Activated CD4-positive, alpha-beta T cell treated with anti-CD3 and anti-CD28 coated beads, Interleukin-2, amount 10 ng/mL, durations not matched to agents 24 days and 14 days (primary cell): ENCODE measurements at regions of chr1 and their contacts with region 1.

Region 1: DNA sequence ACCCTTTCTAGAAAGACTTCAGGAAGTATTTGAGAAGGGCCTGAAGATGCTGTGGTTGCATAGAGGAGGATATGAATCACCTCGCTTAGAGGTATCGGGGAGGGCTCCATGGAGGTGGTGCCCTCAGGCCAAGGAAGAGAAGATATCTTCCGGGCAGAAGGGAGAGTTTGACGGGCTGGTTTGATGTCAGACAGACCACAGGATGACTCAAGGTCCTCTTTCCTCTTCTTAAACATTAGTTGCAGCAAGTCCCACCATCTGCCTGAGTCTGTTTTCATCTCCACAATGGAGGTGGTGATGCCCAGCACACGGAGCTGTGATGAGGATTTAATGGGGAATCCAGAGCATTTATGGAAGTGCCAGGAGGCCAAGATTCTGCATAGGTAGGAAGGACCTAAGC is 25.1 kb upstream of the RUNX3 start:
- DNase-seq: peak; percentile 92
- H3K4me3 Mint-ChIP-seq: peak overlapping the region; percentile 81
- H3K27ac Mint-ChIP-seq: peak overlapping the region; percentile 94
- H3K4me1 Mint-ChIP-seq: peaks cover 79% of the 10 kb centered on the region
- H3K27me3 Mint-ChIP-seq: no peaks in the 10 kb centered on the region

Region 2: DNA sequence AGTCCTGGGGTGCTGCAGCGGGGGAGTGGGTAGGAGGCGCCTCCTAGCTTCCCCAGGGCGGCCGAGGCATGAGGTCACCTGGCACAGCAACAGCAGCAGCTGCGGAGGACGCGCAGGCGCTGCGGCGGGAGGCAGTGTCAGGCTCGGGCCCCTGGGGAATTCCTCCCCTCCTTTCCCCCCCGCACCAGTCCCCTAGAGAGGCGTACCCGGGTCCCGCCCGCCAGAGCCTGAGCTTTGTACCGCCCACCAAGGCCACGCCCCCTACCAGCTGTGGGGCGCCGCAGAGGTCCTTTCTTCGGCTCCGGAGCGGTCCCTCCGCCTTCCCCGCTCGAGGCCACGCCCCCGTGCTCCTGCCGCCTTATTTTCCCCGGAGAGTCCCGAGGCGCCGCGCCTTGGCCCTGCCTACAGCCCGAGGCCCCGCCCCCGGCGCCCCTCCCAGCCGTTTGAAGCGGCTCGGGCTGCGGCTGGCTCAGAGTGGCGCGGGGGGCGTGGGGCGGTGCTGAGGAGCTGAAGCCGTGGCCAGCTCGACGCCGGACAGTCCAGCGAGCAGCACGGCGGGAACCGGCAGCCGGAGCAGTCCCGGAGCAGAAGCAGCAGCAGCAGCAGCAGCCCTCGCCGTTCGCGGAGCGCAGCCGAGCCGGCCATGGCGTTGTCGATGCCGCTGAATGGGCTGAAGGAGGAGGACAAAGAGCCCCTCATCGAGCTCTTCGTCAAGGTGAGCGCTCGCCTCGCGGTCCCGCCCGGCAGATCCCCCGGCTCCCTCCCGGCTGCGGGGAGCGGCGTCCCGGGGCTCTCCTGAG is 210.1 kb before region 1 on chr1 and contains the start of gene CLIC4:
- intact Hi-C with region 1: loop called (anchors 10 kb)
- DNase-seq: peak; percentile 100
- H3K4me3 Mint-ChIP-seq: peak within 1 kb of the TSS; percentile 94
- H3K27ac Mint-ChIP-seq: peak within 1 kb of the TSS; percentile 86
- H3K4me1 Mint-ChIP-seq: peaks cover 53% of the 10 kb centered on the region
- H3K27me3 Mint-ChIP-seq: no peaks in the 10 kb centered on the region
- total RNA-seq, gene CLIC4: 15.7 and 17.4 TPM in 2 replicates

Region 3: DNA sequence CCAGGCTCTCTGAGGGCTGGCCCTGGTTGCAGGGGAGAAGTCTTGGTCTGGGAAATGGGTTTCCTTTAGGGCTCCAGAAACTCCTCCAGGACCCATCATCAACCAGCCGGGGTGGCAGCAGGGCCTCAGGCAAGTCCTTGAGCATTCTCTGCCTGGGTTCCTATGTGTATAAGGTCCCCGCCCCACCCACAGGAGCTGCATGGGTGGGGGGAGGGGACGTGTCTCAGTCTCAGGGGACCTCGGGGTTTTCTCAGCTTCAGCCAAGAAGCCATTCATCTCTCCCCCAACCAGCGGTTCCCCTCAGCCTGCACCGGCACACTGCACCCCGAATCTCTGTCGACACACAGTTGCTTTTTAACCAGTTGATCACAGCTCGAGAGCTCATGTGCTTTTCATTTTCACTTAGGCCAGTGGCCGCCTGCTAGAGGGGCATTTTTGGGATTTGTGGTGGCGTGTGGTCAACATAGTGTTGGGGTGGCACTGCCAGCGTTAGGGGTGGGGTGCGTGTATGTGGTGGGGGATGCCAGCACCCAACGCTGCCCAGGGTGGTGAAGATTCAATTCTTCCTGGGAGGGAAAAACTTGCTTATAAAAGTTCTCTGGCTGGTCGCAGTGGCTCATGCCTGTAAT is 31.6 kb before region 1 on chr1:
- intact Hi-C with region 1: loop called (anchors 1 kb)
- DNase-seq: no peak
- H3K4me3 Mint-ChIP-seq: peak overlapping the region; percentile 23
- H3K27ac Mint-ChIP-seq: peak overlapping the region; percentile 78
- H3K4me1 Mint-ChIP-seq: peaks cover 67% of the 10 kb centered on the region
- H3K27me3 Mint-ChIP-seq: peaks cover 2% of the 10 kb centered on the region